Activated T-helper 1 cell treated with anti-CD3 and anti-CD28 coated beads, Interleukin-12 subunit alpha, Interleukin-12 subunit beta, Interleukin-2, Interleukin-4 antibody, amounts not matched to agents 30 ng/mL and 10 ng/mL and 1 ng/mL, durations not matched to agents 14 hours and 24 hours and 36 hours (primary cell): ENCODE measurements at regions of chr3 and their contacts with region 1.

Region 1: GRCh38 chr3:171187706-171188290 is 161.3 kb upstream of the SLC2A2 start:
- DNase-seq: no peak
- H3K4me3 Mint-ChIP-seq: no peak overlapping the region
- H3K27ac Mint-ChIP-seq: no peak overlapping the region
- H3K4me1 Mint-ChIP-seq: peaks cover 56% of the 10 kb centered on the region
- H3K27me3 Mint-ChIP-seq: no peaks in the 10 kb centered on the region

Region 2: DNA sequence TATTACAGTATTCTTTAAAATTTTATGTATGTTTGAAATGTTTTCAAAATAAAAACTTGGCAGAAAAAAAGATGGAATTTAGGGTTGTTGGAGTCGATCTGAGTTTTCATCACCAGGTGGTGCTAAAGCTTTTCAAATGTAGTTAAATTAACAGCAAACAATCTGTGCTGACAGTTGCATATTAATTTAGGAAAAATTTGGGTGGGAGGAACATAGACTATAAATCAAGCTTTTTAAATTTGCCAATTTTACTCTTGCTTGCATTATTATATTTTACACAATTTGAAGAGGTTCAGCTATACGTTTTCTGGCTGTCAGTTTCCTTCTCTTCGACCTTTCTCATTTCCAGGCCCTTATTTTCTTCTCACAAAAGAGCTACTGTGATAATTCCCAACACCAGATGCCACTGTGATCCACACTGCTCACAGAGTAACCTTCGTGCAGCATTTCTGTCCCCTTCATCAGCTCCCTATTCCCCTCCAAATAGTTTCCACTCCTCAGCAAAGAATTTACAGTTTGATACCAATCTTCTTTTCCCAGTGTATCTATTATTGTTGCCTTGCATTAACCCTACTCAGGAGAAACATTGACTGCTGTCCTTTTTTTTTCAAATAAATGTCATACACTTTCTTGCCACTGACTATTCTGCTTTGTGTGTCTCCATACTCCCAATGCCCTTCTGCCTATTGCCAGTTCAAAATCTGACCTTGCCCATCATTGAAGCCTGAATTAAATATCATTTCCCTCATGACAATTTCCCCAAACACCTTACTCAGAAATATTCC is 226.0 kb before region 1 on chr3:
- intact Hi-C with region 1: loop called (anchors 10 kb)
- DNase-seq: no peak
- H3K4me3 Mint-ChIP-seq: no peak overlapping the region
- H3K27ac Mint-ChIP-seq: no peak overlapping the region
- H3K4me1 Mint-ChIP-seq: no peaks in the 10 kb centered on the region
- H3K27me3 Mint-ChIP-seq: peaks cover 13% of the 10 kb centered on the region

Region 3: DNA sequence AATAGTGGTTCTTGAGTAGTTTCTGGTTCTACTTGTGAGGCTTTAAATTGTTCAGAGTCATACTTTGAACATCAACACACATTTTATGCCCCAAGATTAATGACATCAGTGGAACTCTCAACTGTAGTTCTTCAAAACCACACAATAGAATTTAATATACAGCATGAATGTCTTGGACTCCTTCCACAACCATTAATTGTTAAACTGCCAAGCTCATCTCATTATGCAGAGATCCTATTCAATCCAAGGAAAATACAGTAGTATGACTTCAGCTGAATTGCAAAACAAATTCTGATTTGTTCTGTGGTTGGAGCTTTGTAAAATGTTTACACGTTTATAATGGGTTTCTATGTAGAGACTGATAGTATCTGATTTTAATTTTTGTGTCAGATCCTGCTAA is 37.9 kb after region 1 on chr3:
- intact Hi-C with region 1: loop called (anchors 1 kb)
- DNase-seq: no peak
- H3K4me3 Mint-ChIP-seq: no peak overlapping the region
- H3K27ac Mint-ChIP-seq: no peak overlapping the region
- H3K4me1 Mint-ChIP-seq: peaks cover 58% of the 10 kb centered on the region
- H3K27me3 Mint-ChIP-seq: no peaks in the 10 kb centered on the region